ENCODE measurements at regions of chr4 and their contacts with region 1.

Region 1: GRCh38 chr4:53804719-53805118 is 213.4 kb upstream of the LNX1 start:
- H3K4me3 Mint-ChIP-seq: no peak overlapping the region
- H3K27ac Mint-ChIP-seq: no peak overlapping the region
- H3K4me1 Mint-ChIP-seq: no peaks in the 10 kb centered on the region
- H3K27me3 Mint-ChIP-seq: no peaks in the 10 kb centered on the region

Region 2: DNA sequence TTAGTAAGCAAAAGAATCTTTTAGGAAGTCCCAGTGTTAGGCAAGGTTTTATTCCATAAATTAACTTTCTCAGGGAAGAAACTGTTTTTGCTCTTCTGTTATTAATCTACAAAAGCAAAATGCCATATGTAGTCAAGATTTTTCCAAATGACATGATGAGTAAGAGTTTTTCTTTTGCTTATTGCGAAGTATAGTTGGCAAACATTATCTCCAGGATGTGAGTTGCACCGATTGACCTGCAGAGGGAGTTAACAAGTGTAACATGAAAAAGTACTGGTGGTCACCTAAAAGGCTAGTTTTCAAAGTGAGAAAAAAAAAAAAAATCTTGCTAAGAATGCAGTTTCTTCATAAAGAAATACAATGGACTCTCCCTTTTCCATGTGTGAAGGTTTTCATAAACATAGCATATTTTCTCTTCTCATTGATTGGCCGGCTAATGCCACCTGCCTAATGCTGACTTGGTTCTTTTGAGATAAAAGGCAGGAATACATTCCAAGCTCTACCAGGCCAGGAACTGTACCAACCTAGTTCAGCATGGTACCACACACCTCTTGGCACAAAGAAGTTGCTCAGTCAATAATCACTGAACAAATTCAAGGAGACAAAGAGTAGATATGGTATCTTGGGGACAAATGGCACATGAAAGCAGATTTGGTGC is 313.6 kb before region 1 on chr4:
- intact Hi-C with region 1: loop called (anchors 5 kb)
- H3K4me3 Mint-ChIP-seq: no peak overlapping the region
- H3K27ac Mint-ChIP-seq: no peak overlapping the region
- H3K4me1 Mint-ChIP-seq: no peaks in the 10 kb centered on the region
- H3K27me3 Mint-ChIP-seq: peaks cover 4% of the 10 kb centered on the region

Region 3: GRCh38 chr4:53706422-53707032 is 98.2 kb before region 1 on chr4:
- intact Hi-C with region 1: loop called (anchors 2 kb)
- H3K4me3 Mint-ChIP-seq: no peak overlapping the region
- H3K27ac Mint-ChIP-seq: no peak overlapping the region
- H3K4me1 Mint-ChIP-seq: peaks cover 25% of the 10 kb centered on the region
- H3K27me3 Mint-ChIP-seq: no peaks in the 10 kb centered on the region

Measured in dendritic cell treated with granulocyte-macrophage colony-stimulating factor and Interleukin-4, amounts not matched to agents 40 ng/mL and 50 ng/mL, for 4 days (primary cell).